MCF 10A (cell line): ENCODE measurements at regions of chr12 and their contacts with region 1.

Region 1: GRCh38 chr12:12803186-12803585 is 10.0 kb upstream of the DDX47 start:
- DNase-seq: peak; percentile 99
- H3K4me3 Mint-ChIP-seq: peak overlapping the region; percentile 11
- H3K27ac Mint-ChIP-seq: peak overlapping the region; percentile 67
- H3K4me1 Mint-ChIP-seq: peaks cover 48% of the 10 kb centered on the region
- H3K27me3 Mint-ChIP-seq: no peaks in the 10 kb centered on the region
- CTCF ChIP-seq: no peak

Region 2: DNA sequence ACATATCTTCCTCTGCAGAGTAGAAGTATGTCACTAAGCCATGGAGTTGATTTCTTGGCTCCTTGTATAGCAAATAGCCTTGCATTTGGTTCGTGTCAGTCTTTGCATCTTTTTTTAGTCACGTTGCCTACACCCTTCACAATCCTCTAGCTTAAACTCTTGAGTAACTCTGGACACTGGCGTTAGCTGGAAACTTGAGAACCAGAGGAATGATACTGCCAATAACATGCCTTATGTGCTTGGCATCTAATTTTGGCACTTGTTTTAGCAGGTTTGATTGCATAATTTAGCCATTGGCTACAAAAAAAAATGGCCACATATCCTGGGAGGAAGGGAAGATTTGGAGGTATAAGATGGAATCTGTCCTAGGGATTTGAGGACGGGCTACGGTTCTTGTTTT is 1017.5 kb before region 1 on chr12:
- CTCF ChIA-PET with region 1: no interaction called
- POLR2A ChIA-PET with region 1: no interaction called
- intact Hi-C with region 1: no loop called
- DNase-seq: peak; percentile 97
- H3K4me3 Mint-ChIP-seq: no peak overlapping the region
- H3K27ac Mint-ChIP-seq: peak overlapping the region; percentile 34
- H3K4me1 Mint-ChIP-seq: peaks cover 18% of the 10 kb centered on the region
- H3K27me3 Mint-ChIP-seq: no peaks in the 10 kb centered on the region
- CTCF ChIP-seq: no peak

Region 3: DNA sequence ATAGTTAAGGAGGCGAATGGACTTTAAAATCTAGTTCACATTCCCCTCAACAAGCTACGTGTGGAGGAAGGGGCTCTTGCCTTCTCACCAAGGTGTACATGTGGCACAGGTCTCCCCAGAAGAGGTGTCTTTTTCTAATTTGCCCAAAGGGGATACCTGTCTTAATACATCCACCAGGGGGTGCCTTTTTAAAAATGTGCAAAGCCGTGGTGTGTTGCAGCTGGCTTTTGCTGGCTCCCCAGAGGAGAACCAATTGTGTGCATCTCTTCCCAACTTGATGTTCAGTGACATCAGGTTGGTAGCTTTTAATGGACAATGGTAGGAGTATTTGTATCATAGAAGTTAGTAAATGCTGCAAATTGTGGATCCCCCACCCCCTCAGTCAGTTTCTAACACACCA is 157.7 kb before region 1 on chr12:
- CTCF ChIA-PET with region 1: no interaction called
- POLR2A ChIA-PET with region 1: no interaction called
- intact Hi-C with region 1: no loop called
- DNase-seq: peak; percentile 54
- H3K4me3 Mint-ChIP-seq: no peak overlapping the region
- H3K27ac Mint-ChIP-seq: no peak overlapping the region
- H3K4me1 Mint-ChIP-seq: no peaks in the 10 kb centered on the region
- H3K27me3 Mint-ChIP-seq: no peaks in the 10 kb centered on the region
- CTCF ChIP-seq: no peak

Region 4: DNA sequence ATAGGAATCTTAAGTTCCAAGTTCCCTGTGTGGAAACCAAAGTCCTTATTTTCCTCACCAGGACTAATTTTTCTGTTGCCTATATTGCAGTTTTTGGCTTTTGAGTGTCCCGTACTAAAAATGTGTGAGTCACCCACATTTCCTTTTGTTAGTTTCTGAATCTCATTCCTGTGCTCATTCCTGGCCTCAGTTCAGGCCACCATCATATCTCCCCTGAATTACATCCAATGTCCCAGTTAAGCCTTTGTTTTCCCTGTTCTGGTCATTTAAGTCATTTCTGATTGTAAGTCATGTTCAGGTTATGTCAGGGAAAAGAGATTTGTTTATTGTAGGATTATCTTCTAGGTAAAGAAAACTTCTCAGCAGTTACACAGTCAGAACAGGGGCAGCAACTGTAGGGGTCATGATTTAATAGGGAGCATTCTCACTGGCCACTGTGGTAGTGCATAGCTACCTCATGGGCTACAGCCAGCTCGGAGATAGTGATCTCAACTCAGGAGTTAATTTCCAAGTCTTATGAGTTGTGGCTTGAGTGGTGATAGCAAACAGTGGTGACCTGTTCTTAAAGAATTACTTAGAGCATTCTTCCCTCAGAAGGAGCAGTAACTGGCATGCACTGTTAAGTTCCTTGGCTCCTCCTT is 16.6 kb after region 1 on chr12:
- CTCF ChIA-PET with region 1: interaction called, 10 read pairs
- POLR2A ChIA-PET with region 1: interaction called, 11 read pairs
- intact Hi-C with region 1: no loop called
- DNase-seq: peak; percentile 53
- H3K4me3 Mint-ChIP-seq: peak overlapping the region; percentile 27
- H3K27ac Mint-ChIP-seq: peak overlapping the region; percentile 71
- H3K4me1 Mint-ChIP-seq: peaks cover 44% of the 10 kb centered on the region
- H3K27me3 Mint-ChIP-seq: no peaks in the 10 kb centered on the region
- CTCF ChIP-seq: no peak